Panc1 (cell line): ENCODE measurements at regions of chr3 and their contacts with region 1.

Region 1: GRCh38 chr3:119427669-119428068 is 35.7 kb downstream of the TMEM39A start:
- DNase-seq: no peak
- ATAC-seq: no peak
- H3K4me3 ChIP-seq: no peak overlapping the region
- H3K27ac ChIP-seq: no peak overlapping the region
- H3K4me1 ChIP-seq: no peaks in the 10 kb centered on the region
- H3K27me3 ChIP-seq: no peaks in the 10 kb centered on the region
- CTCF ChIP-seq: no peak

Region 2: DNA sequence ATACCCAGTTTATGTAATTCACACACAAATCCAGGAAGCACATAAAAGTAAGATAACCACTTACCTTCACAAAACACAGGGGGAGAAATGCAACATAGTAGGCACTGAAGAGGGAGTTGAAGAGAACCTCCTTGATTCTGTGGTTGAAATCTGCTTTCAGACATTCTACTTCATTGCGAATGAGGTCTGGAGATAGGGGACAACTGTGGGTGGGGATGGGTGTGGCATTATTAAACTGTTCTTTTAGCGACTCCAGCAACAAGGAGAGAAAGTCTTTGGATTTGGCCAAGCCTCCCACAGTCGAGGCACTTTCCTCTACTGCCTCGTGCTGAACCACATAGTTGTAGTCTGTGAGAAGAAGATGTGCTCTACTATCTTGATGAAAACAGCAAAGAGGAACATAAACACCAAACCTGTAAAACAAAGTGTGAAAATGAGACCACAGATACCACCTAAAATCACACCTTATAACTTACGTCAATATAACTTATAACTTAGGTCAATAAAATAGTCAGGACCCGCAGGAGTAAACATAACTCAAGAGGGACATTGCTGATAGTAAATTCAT is 10.1 kb after region 1 on chr3:
- CTCF ChIA-PET with region 1: interaction called, 3 read pairs
- POLR2A ChIA-PET with region 1: interaction called, 17 read pairs
- in situ Hi-C with region 1: no loop called
- intact Hi-C with region 1: no loop called
- DNase-seq: no peak
- ATAC-seq: no peak
- H3K4me3 ChIP-seq: no peak overlapping the region
- H3K27ac ChIP-seq: no peak overlapping the region
- H3K4me1 ChIP-seq: no peaks in the 10 kb centered on the region
- H3K27me3 ChIP-seq: no peaks in the 10 kb centered on the region
- CTCF ChIP-seq: no peak